ENCODE measurements at regions of chr17 and their contacts with region 1.

Region 1: GRCh38 chr17:37373530-37374159 is 2.1 kb upstream of the C17orf78 start:
- DNase-seq: peak; percentile 82
- ATAC-seq: peak; percentile 92
- H3K4me3 ChIP-seq: no peak overlapping the region
- H3K27ac ChIP-seq: no peak overlapping the region
- H3K4me1 ChIP-seq: peaks cover 9% of the 10 kb centered on the region
- H3K27me3 ChIP-seq: no peaks in the 10 kb centered on the region
- CTCF ChIP-seq: peak; percentile 97
- EP300 ChIP-seq: no peak
- POLR2A ChIP-seq: no peak
- RAD21 ChIP-seq: peak; percentile 91

Region 2: GRCh38 chr17:37339321-37339720 is 34.3 kb before region 1 on chr17:
- CTCF ChIA-PET with region 1: no interaction called
- POLR2A ChIA-PET with region 1: no interaction called
- in situ Hi-C with region 1: no loop called
- intact Hi-C with region 1: no loop called
- DNase-seq: no peak
- ATAC-seq: no peak; the same call in 2 of the 3 replicates
- H3K4me3 ChIP-seq: no peak overlapping the region
- H3K27ac ChIP-seq: peak overlapping the region; percentile 46
- H3K4me1 ChIP-seq: peaks cover 34% of the 10 kb centered on the region
- H3K27me3 ChIP-seq: no peaks in the 10 kb centered on the region
- CTCF ChIP-seq: no peak
- EP300 ChIP-seq: no peak; a peak in 1 of 4 replicates
- POLR2A ChIP-seq: no peak
- RAD21 ChIP-seq: no peak

Region 3: GRCh38 chr17:37392024-37392590 is 18.5 kb after region 1 on chr17:
- CTCF ChIA-PET with region 1: interaction called, 35 read pairs
- POLR2A ChIA-PET with region 1: no interaction called
- in situ Hi-C with region 1: no loop called
- intact Hi-C with region 1: loop called (anchors 1 kb)
- DNase-seq: no peak
- ATAC-seq: no peak
- H3K4me3 ChIP-seq: no peak overlapping the region
- H3K27ac ChIP-seq: no peak overlapping the region
- H3K4me1 ChIP-seq: no peaks in the 10 kb centered on the region
- H3K27me3 ChIP-seq: no peaks in the 10 kb centered on the region
- CTCF ChIP-seq: no peak
- EP300 ChIP-seq: no peak
- POLR2A ChIP-seq: no peak
- RAD21 ChIP-seq: no peak

Region 4: GRCh38 chr17:37406635-37407461 is 33.2 kb after region 1 on chr17 and contains the starts of genes ACACA and TADA2A:
- CTCF ChIA-PET with region 1: no interaction called
- POLR2A ChIA-PET with region 1: interaction called, 10 read pairs
- in situ Hi-C with region 1: no loop called
- intact Hi-C with region 1: no loop called
- DNase-seq: peak; percentile 63
- ATAC-seq: peak; percentile 96
- H3K4me3 ChIP-seq: peak within 1 kb of the TSS; percentile 75 to 87 (median 76)
- H3K27ac ChIP-seq: peak within 1 kb of the TSS; percentile 89
- H3K4me1 ChIP-seq: peaks cover 34% of the 10 kb centered on the region
- H3K27me3 ChIP-seq: no peaks in the 10 kb centered on the region; a peak in 1 of 5 replicates
- CTCF ChIP-seq: no peak
- EP300 ChIP-seq: 0 out of 4 replicates have a peak, but pooled peaks of 1 of the 2 experiments have one; percentile 24
- POLR2A ChIP-seq: peak; percentile 86 to 90
- RAD21 ChIP-seq: peak; percentile 34; the same call in 1 of the 2 replicates
- total RNA-seq, gene ACACA: 47.2 and 66.3 TPM in 2 replicates
- total RNA-seq, gene TADA2A: 13.0 and 14.0 TPM in 2 replicates

Region 5: DNA sequence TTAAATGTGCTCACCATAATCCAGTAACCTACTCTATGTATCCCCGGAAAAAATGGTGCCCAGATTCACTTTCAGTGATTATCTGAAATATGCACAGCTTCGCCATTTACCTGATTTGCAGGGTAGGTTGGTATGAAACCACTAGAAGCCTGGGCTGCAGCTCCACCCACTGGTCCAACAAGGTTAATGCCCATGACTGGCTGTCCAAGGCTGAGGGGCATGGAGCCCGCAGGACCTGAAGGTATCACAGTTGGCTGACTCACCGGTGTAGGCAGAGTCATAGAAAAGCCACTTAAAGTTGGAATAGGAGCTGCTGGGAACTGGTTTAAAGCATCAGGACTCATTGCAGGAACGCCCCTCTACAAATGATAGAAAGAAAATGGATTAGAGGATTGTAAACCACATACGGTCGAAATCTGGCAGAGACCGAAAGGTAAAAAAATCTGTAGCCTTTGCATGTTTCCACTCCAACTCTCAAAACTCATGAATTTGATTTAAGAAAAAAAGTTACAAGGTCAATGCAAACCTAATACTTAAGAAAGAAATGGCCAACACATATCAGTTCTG is 197.0 kb after region 1 on chr17:
- CTCF ChIA-PET with region 1: interaction called, 4 read pairs
- POLR2A ChIA-PET with region 1: no interaction called
- in situ Hi-C with region 1: no loop called
- intact Hi-C with region 1: loop called (anchors 5 kb)
- DNase-seq: peak; percentile 60
- ATAC-seq: peak; percentile 94
- H3K4me3 ChIP-seq: no peak overlapping the region
- H3K27ac ChIP-seq: no peak overlapping the region
- H3K4me1 ChIP-seq: no peaks in the 10 kb centered on the region
- H3K27me3 ChIP-seq: no peaks in the 10 kb centered on the region
- CTCF ChIP-seq: peak; percentile 85
- EP300 ChIP-seq: no peak
- POLR2A ChIP-seq: no peak
- RAD21 ChIP-seq: peak; percentile 57; the same call in 1 of the 2 replicates